Posterior cingulate gyrus (tissue), 11 donors: ENCODE measurements at regions of chr6 and their contacts with region 1.

Region 1: GRCh38 chr6:45714741-45715507 is 300.7 kb downstream of the CLIC5 start:
- DNase-seq: peak in 4 of 10 donors; percentile 9 to 53 (median 43)

Region 2: DNA sequence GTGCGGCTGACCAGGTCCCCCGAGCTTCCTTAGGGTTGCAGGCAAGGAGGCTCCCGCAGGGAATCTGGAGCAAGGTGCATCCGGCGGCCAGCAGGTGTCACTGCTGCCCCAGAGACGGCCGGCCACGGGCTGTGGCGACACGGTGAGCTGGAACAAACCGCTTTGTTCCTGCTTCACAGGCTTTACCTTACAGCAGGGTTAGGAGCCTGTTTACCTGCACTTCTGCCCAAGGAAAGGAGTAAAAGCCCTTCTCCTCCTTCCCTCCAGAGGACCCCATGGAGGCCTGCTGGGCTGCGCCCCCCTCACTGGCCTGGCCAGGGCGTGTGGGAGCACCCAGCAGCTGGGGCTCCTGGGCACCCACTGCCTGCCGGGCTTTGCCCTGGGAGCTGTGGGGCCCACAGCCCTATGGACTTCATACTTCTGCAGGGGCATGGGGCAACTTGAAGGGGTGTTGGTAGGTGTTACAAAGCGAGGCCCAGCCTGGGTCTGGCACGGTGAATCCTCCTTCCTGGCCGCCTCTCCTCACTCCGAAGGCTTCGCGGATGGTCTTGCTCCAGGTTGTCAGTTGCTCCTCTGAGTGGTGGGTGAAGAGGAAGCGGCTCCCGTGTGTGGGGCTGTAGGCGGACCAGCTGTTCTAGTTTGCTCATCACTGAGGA is 1239.0 kb before region 1 on chr6:
- intact Hi-C with region 1: loop called (anchors 5 kb)
- DNase-seq: peak; percentile 70 to 98 (median 86)

Region 3: DNA sequence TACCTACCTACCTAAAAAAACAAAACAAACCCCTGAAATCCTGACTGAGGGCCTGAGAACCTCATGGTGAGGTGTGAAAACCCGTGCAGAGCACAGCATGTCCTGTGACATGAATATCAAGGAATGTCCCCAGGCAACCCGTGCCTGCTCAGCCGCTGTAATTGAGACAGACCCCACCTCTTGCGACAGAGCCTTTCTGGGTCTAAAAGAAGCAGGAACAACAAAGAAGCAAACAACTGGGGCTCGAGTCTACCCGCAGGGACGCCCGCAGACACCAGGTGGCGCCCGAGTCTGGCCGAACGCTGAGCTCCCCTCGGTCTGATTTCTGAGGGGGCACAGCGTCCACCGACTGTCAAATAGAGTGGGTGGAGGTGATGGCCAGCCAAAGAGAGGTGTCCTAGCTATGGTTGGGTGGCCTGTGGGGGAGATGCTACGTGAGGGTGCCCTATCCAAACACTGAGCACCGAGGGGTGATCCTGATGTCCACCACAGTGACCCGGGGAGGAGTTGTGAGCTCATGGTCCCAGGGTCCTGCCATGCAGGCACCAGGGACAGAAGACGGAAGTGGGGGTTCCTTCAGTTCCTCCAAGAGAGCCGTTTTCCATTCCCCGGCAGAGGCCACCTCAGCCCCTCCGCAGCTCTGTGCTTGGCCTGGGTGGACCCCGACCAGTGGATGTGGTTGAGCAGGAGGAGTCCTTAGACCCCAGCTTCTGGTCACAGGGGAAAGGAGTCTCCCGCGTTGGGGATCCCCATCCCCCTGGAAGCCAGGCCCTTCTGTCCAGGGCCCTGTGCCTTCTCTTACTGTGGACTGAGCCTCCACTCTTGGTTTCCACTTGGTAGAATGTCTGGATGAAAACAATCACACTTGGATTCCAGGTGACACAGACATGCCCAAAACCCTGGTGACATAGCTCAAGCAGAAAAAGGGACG is 1059.2 kb before region 1 on chr6:
- intact Hi-C with region 1: loop called (anchors 1 kb)
- DNase-seq: peak; percentile 35 to 96 (median 78)

Region 4: GRCh38 chr6:45421709-45422502 is 293.0 kb before region 1 on chr6:
- intact Hi-C with region 1: loop called (anchors 10 kb)
- DNase-seq: peak in 9 of 10 donors; percentile 45 to 94 (median 60)

Region 5: GRCh38 chr6:45922728-45923351 is 207.9 kb after region 1 on chr6:
- intact Hi-C with region 1: loop called (anchors 2 kb)
- DNase-seq: peak; percentile 54 to 95 (median 78)